ENCODE measurements at regions of chr16 and their contacts with region 1.

Region 1: DNA sequence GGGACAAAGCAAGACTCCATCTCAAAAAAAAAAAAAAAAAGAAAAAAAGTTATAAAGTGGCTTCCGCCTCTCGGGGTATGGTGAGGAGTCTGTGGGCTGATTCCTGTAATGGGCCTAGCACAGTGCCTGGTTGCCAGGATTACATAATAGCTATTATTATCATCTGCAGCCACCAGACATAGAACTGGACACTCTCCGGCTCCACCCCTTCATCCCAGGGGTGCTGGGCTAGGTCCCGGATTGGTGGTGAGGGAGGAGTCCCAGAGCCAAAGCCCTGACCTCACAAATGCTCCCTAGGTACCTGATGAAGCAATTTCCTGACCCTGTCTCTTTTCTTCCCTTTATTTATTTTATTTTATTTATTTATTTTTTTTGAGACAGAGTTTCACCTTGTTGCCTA is 11.6 kb upstream of the ADGRG1 start:
- DNase-seq: no peak
- H3K4me3 Mint-ChIP-seq: no peak overlapping the region
- H3K27ac Mint-ChIP-seq: no peak overlapping the region
- H3K4me1 Mint-ChIP-seq: peaks cover 15% of the 10 kb centered on the region
- H3K27me3 Mint-ChIP-seq: no peaks in the 10 kb centered on the region

Region 2: DNA sequence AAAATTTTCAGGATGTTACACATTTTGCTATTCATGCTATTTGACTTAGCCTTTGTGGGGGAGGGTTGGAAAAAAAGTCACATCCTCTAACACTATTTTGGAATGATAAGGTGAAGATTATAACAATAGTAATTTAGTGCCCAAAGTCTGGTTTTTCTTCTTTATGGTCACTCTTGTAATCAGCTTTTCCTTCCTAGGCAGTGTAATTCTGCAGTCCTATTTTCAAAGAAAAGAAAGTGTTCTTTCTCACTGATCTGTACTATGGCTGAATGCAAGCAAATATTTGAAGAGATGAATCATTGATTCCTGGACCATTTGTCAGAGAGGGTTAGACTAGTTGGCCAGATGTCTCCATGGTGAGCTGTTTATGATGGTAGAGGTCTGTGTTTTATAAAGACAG is 422.4 kb before region 1 on chr16:
- CTCF ChIA-PET with region 1: no interaction called
- POLR2A ChIA-PET with region 1: no interaction called
- DNase-seq: no peak
- H3K4me3 Mint-ChIP-seq: no peak overlapping the region
- H3K27ac Mint-ChIP-seq: no peak overlapping the region
- H3K4me1 Mint-ChIP-seq: peaks cover 14% of the 10 kb centered on the region
- H3K27me3 Mint-ChIP-seq: no peaks in the 10 kb centered on the region

Region 3: DNA sequence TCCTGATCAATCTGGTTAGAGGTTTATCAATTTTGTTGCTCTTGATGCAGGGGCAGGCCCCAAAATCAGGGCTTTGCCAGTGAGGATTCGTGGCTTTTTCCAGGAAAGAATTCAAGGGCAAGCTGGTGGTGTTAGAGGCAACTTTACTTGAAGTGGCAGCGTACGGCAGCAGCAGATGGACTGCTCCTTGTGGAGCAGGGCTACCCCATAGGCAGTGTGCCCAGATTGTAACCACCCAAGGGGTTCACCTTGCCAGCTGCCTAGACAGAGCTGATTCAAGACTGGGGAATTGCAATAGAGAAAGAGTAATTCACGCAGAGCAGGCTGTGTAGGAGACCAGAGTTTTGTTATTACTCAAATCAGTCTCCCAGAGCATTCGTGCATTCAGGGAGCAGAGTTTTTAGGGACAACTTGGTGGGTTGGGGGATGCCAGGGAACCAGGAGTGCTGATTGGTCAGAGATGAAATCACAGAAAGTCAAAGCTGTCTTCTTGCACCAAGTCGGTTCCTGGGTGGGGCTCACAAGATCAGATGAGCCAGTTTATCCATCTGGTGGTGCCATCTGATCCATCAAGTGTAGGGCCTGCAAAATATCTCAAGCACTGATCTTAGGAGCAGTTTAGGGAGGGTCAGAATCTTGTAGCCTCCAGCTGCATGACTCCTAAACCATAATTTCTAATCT is 94.6 kb after region 1 on chr16:
- CTCF ChIA-PET with region 1: no interaction called
- POLR2A ChIA-PET with region 1: interaction called, 10 read pairs
- DNase-seq: no peak
- H3K4me3 Mint-ChIP-seq: no peak overlapping the region
- H3K27ac Mint-ChIP-seq: no peak overlapping the region
- H3K4me1 Mint-ChIP-seq: no peaks in the 10 kb centered on the region
- H3K27me3 Mint-ChIP-seq: peaks cover 34% of the 10 kb centered on the region

Measured in activated CD4-positive, alpha-beta T cell treated with anti-CD3 and anti-CD28 coated beads, Interleukin-2, amount 10 ng/mL, durations not matched to agents 7 days and 5 days (primary cell).